CD8-positive, alpha-beta memory T cell (primary cell): ENCODE measurements at regions of chr20 and their contacts with region 1.

Region 1: DNA sequence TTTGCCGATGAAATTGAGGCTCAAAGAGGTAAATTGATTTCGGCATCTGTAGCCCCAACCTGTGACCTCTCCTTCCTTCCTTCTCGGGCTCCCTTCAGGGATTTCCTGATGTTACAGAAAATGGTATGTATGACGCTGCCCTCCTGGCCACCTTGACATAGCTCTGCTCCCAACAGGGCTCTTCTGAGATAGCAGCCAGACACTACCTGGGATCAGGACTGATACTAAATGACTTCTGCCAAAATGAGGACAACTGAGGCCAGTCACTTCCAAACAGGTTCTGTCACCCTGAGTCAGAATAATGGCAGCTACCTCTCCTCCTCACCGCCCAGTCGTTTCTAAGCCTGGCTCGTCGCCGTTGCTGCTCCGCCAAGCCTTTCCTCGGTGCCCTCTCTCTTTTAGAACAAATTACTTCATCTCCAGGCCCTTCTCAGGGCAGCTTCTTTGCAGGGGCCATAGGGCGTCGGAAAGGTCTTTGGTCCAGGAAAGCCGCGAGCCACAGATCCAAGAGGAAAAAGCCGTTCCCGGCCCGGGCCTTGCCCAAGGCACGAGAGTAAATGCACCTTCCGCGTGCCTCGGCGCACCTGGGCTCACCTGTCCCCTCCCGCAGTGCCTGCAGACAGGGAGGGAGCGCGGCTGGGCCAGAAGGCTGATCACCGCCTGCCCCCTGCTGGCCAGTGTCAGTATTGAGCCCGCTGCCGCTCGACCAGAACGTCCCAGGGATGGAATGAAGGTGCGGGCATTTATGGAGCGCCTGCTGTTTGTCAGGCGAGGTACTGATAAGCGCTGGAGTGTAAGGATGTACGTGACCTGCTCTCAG is 904 bp upstream of the LPIN3 start:
- DNase-seq: peak; percentile 74 to 86 (median 80)
- H3K4me3 ChIP-seq: peak overlapping the region; percentile 60
- H3K4me3 Mint-ChIP-seq: peak overlapping the region; percentile 14 to 88 (median 83)
- H3K27ac ChIP-seq: no peak overlapping the region
- H3K27ac Mint-ChIP-seq: peak overlapping the region in 4 of 8 donors; percentile 14 to 77 (median 36)
- H3K4me1 ChIP-seq: peaks cover 7% of the 10 kb centered on the region
- H3K4me1 Mint-ChIP-seq: peaks cover 9 to 11% (median 10%) of the 10 kb centered on the region in 3 donors
- H3K27me3 ChIP-seq: no peaks in the 10 kb centered on the region
- H3K27me3 Mint-ChIP-seq: peaks cover 8 to 19% of the 10 kb centered on the region in 2 donors

Region 2: GRCh38 chr20:40970201-40970600 is 369.5 kb before region 1 on chr20:
- CTCF ChIA-PET with region 1: interaction called, 21 read pairs
- POLR2A ChIA-PET with region 1: no interaction called
- DNase-seq: no peak
- H3K4me3 ChIP-seq: no peak overlapping the region
- H3K4me3 Mint-ChIP-seq: no peak overlapping the region
- H3K27ac ChIP-seq: no peak overlapping the region
- H3K27ac Mint-ChIP-seq: no peak overlapping the region
- H3K4me1 ChIP-seq: no peaks in the 10 kb centered on the region
- H3K4me1 Mint-ChIP-seq: peaks cover 7 to 10% (median 9%) of the 10 kb centered on the region in 3 donors
- H3K27me3 ChIP-seq: peaks cover 3% of the 10 kb centered on the region
- H3K27me3 Mint-ChIP-seq: peaks cover 3 to 7% of the 10 kb centered on the region in 2 donors

Region 3: GRCh38 chr20:41329435-41330342 is 10.0 kb before region 1 on chr20:
- CTCF ChIA-PET with region 1: interaction called, 12 read pairs
- POLR2A ChIA-PET with region 1: no interaction called
- DNase-seq: peak; percentile 10 to 63 (median 30)
- H3K4me3 ChIP-seq: peak overlapping the region; percentile 33
- H3K4me3 Mint-ChIP-seq: peak overlapping the region in 3 of 7 donors; percentile 41 to 75 (median 66)
- H3K27ac ChIP-seq: no peak overlapping the region
- H3K27ac Mint-ChIP-seq: peak overlapping the region in 5 of 8 donors; percentile 6 to 82 (median 35)
- H3K4me1 ChIP-seq: peaks cover 12% of the 10 kb centered on the region
- H3K4me1 Mint-ChIP-seq: peaks cover 10 to 13% (median 13%) of the 10 kb centered on the region in 3 donors
- H3K27me3 ChIP-seq: no peaks in the 10 kb centered on the region
- H3K27me3 Mint-ChIP-seq: no peaks in the 10 kb centered on the region

Region 4: DNA sequence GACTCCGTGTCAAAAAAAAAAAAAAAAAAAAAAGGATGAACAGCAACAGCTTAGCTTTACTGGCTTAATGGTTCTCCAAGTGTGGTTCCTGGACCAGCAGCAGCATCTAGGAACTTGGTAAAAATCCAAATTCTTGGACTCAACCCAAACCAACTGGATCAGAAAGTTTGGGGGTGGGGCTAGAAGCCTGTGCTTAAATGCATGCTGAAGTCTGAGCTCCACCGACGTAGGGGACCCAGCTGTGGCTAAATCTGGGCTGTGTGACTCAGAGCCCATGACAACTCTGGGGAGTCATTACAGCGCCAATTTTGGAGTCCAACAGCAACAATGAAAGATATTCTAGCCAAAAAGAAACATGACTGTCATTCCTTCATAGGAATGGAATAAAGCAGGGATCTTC is 292.1 kb after region 1 on chr20:
- CTCF ChIA-PET with region 1: no interaction called
- POLR2A ChIA-PET with region 1: no interaction called
- DNase-seq: no peak
- H3K4me3 ChIP-seq: no peak overlapping the region
- H3K4me3 Mint-ChIP-seq: no peak overlapping the region
- H3K27ac ChIP-seq: no peak overlapping the region
- H3K27ac Mint-ChIP-seq: no peak overlapping the region
- H3K4me1 ChIP-seq: no peaks in the 10 kb centered on the region
- H3K4me1 Mint-ChIP-seq: peaks cover 0 to 4% (median 1%) of the 10 kb centered on the region in 3 donors
- H3K27me3 ChIP-seq: peaks cover 3% of the 10 kb centered on the region
- H3K27me3 Mint-ChIP-seq: peaks cover 8 to 26% of the 10 kb centered on the region in 2 donors

Region 5: DNA sequence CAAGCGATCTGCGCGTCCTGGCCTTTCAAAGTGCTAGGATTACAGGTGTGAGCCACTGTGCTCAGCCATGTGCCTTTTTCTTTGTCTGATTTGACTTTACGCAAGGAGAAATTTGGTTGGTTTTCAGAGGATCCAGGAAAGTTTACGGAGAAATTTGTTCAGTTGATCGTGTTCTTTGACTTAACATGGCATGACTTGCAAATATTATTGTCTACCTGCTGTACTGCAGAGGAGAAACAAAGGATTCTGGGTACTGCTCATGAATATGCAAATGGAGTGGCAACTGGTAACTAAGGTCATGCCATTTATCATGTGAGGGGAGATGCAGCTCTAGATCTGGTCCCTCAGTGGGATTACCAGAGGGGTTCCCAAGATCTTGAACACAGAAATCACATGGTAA is 347.2 kb after region 1 on chr20:
- CTCF ChIA-PET with region 1: no interaction called
- POLR2A ChIA-PET with region 1: no interaction called
- DNase-seq: no peak
- H3K4me3 ChIP-seq: no peak overlapping the region
- H3K4me3 Mint-ChIP-seq: no peak overlapping the region
- H3K27ac ChIP-seq: no peak overlapping the region
- H3K27ac Mint-ChIP-seq: no peak overlapping the region
- H3K4me1 ChIP-seq: no peaks in the 10 kb centered on the region
- H3K4me1 Mint-ChIP-seq: peaks cover 0 to under 1% (median 0%) of the 10 kb centered on the region in 3 donors
- H3K27me3 ChIP-seq: no peaks in the 10 kb centered on the region
- H3K27me3 Mint-ChIP-seq: peaks cover 21 to 40% of the 10 kb centered on the region in 2 donors